ENCODE measurements at regions of chr12 and their contacts with region 1.

Region 1: GRCh38 chr12:70590051-70590450 is 47.2 kb downstream of the PTPRB start:
- DNase-seq: peak; percentile 65 to 72
- ATAC-seq: peak; percentile 49 to 61 (median 52)
- H3K4me3 ChIP-seq: no peak overlapping the region
- H3K27ac ChIP-seq: no peak overlapping the region
- H3K4me1 ChIP-seq: no peaks in the 10 kb centered on the region
- H3K27me3 ChIP-seq: no peaks in the 10 kb centered on the region
- CTCF ChIP-seq: peak; percentile 74

Region 2: DNA sequence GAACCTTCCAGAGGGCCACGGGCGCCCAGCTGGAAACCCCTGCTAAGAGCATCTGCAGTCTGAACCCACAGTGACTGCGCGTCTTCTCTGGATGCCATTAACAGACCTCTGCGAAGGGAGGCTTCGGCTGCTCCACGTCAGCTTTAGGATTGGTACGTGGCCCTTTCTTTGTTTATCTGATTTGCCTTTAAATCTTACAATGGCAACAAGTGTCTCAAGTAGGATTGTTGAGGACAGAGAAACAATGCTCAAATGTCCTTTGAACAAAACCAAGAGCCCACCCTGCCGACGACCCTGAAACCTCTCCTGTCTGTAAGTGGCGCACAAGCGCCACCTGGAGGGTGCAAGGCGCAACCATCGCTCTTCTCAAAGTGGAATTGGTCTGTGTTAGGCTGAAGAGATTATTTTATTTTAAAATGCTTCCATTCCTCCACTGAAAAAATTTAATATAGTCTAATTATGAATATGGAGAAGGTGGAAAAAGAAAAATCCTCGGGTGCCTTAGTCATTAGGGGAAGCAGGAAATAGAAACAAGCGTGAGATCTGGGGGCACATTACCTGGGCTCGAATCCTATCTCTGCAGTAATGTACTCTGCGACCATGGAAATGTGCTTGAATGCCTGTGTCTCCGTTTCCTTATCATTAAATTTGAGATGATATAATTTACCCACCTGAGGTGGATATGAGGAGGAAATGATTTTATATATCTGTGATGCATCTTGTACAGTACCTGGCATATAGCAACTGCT is 129.8 kb after region 1 on chr12:
- intact Hi-C with region 1: loop called (anchors 2 to 5 kb)
- DNase-seq: peak; percentile 27 to 60
- ATAC-seq: peak in 2 of 4 donors; percentile 56 to 74
- H3K4me3 ChIP-seq: peak overlapping the region; percentile 35
- H3K27ac ChIP-seq: peak overlapping the region; percentile 34
- H3K4me1 ChIP-seq: no peaks in the 10 kb centered on the region
- H3K27me3 ChIP-seq: no peaks in the 10 kb centered on the region
- CTCF ChIP-seq: peak; percentile 81